ENCODE measurements at regions of chr10 and their contacts with region 1.

Region 1: DNA sequence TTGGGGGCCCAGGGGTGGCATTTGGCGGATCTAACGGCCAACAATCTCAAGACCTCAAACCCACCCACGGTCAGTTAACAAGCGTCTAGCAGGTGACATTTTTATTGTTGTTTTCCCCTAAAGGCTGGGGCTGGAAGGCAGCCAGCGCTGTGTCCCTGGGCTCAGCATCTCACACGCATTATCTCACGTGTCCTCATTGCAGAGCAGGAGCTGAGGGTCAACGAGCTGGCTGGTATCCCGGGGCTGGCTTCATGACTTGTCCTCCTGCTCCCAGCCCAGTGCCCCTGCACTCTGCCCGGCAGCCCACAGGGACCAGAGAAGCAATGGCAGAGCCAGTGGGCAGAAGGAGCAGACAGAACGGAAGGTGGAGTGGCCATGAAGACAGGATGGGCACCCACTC is 54.4 kb upstream of the TMEM273 start:
- DNase-seq: peak; percentile 74
- ATAC-seq: peak; percentile 82 to 90

Region 2: DNA sequence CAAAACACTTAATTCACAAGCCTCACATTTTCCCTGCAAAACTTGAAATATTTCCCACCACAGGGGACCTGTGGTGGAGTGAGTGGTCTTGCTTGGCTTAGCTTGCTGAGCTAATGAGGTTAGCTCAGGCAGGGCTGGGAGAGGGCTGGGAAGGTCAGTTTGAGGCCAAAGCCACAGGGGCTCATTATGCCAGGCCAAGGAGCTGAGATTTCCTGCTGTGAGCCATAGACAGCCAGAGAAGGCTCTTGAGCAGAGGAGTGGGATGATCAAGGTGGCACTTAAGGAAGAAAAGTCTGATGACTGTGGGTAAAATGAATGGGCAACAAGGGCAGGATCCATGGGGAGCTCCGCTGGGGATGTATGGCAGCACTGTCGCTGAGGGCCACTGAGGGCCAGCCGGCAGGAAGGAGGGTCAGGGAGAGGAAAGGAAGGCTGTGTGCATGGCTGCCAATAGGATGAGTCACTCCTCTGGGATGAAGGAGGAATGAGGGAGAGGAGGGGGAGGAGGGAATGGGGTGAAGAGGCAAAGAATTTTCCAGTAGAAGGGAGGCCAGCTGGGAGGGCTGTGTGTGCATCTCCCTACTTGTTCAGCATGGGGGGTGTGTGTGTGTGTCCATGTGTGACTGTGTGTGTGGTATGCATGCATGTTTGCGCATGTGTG is 1839.8 kb before region 1 on chr10:
- intact Hi-C with region 1: no loop called
- DNase-seq: peak; percentile 64
- ATAC-seq: peak; percentile 90 to 92

Region 3: GRCh38 chr10:49299816-49300139 is 57.2 kb after region 1 on chr10:
- intact Hi-C with region 1: loop called in 1 of 2 experiments (anchors 2 kb)
- DNase-seq: no peak
- ATAC-seq: peak in 1 of 2 donors; percentile 2